HEK293T (cell line): ENCODE measurements at regions of chr15 and their contacts with region 1.

Region 1: DNA sequence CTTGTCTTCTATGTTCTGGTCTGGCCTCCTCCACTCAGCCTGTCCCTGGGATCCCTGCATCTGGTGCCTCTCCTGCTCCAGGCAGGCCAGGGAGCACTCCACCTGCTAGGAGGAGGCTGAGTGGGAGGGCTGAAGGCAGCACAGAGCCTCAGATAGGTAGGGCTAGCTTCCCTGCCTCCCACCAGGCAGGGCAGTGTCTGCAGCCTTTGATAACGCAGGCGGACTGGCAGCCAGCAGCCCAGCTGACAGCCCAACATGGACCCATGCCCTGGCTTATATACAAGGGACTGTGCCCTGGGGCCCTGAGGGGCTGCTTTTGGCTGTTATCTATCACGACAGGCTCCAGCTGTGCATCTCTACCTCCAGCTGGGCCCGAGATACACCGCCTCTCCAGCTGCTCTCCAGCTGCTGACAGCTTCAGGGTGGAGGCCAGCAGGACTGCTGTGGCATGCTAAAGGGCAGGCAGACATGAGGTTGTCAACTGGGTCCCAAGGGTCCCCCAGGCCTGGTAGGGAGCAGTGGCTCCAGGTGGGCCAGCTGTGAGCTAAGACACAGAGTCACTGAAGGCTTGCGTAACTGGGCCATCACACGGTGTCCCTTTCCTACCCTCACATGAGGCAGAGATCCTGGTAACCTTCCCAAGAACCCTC is 5.2 kb upstream of the CLK3 start:
- DNase-seq: no peak

Region 2: DNA sequence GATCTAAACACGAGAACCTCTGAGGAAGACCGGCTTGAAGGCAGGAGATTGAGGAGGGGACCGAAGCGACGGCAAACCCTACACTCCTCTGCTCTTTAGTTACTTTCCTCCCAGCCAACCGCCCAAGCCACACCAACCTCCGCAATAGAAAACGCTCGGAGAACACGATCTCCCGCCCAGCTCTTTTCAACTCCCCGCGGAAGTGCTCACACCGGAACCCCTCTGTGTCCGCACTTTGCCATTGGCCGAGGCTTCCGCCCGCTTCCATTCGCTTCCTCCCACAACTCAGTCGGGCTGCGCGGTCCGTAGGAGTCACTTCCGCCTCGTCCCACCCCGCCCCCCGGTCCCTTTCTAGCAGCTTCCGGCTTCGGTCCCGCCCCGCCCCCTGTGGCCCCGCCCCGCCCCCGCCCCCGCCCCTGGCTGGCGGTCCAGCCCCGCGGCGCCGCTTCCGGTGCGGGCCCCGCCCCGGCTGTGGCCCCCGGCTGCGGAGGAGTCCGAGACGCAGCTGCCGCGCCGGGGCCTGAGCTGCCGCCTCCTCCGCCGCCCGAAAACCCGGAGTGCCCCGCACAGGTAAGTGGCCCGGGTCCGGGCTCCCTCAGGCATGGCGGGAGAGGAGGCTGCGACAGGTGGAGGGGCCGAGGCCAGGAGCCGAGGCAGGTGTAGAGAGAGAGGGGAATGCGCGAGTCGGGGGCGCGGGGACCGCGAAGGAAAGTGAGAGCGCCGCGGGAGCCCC is 69.5 kb before region 1 on chr15 and contains the start of gene ARID3B:
- CTCF ChIA-PET with region 1: no interaction called
- POLR2A ChIA-PET with region 1: interaction called, 70 read pairs
- DNase-seq: peak; percentile 96